H1 (cell line): ENCODE measurements at regions of chr16 and their contacts with region 1.

Region 1: DNA sequence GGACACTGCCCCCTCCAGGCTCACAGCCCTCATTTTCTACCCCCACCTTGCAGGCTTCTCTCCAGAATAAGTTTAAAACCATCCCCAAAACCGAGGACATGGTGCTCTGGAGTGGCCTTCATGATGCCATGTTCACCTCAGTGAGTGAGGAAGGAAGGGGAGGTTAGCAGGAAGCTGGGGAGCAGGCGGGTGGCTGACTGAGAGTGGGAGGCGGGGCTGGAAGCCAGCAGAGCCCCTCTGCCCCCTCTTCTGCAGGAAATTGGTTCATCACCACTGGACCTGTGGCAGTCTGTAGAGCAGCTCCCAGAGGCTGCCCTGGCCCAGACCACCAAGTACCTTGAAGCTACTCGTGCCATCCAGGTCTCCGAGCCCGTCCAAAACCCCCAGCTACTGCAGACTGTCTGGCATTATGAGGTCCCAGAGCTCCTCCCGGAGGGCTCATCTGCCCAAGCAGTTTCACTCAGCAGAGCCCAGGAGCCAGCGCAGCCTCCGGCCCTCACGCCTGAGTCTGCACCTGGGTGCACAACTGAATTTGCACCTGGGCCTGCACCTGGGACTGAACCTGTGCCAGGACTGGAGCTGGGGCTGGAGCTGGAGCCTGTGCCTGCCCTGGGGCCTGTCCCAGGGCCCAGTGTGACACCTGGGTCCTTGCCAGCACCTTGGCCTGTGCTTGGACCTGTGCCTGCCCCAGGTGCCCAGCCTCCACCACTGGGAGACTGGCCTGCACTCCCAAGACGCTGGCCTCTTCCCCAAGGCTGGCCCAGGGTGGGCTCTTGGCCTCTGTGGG is 19.0 kb downstream of the C16orf96 start:
- DNase-seq: peak; percentile 49 to 53
- H3K4me3 ChIP-seq: no peak overlapping the region
- H3K27ac ChIP-seq: no peak overlapping the region
- H3K4me1 ChIP-seq: peaks cover 7 to 11% (median 7%) of the 10 kb centered on the region in 4 experiments
- H3K27me3 ChIP-seq: no peaks in the 10 kb centered on the region
- CTCF ChIP-seq: peak; percentile 63 to 78 (median 70)
- EP300 ChIP-seq: no peak
- POLR2A ChIP-seq: no peak
- RAD21 ChIP-seq: peak; percentile 86 to 93

Region 2: DNA sequence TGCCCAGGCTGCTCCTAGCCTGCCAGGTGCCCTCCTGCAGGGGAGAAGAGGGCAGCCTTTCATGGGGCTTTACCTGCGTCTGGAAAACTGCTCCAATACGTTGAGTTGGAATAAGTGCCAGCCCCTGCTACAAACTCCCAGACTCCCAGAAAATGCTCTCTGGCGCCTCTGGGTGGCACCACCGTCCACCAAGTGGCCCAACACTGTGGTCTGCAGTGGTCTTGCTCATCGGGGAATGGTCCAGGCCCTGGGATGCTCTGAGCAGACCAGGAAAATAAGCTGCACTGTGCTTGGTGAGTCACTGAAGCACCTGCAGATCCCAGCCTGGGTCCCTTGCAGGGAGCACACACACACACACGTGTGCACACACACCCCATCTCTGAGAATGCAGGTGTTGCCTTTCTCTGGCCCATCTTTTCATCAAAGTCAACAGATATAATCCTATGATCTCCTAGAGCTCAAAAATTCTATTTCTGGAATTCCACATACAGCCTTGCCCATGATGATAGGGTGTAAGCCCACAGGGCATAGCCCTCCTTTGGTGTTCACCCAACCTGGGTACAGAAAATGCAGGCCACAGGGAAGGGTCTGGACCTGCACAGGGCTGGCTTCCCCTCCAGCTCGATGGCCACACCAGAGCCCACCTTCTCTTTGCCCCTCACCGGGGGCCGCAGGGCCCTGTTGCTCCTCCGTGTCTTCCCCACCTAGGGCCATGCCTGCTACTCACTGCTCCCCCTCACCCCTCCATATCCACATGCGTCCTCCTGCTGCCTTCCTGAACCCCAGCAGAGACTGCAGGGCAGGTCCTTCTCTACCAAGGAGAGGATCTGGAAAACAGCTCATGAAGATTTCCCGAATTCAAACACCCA is 57.1 kb before region 1 on chr16:
- CTCF ChIA-PET with region 1: interaction called, 134 read pairs
- POLR2A ChIA-PET with region 1: interaction called, 5 read pairs
- DNase-seq: peak in 1 of 2 experiments; percentile 79
- H3K4me3 ChIP-seq: no peak overlapping the region
- H3K27ac ChIP-seq: no peak overlapping the region; the same call in 1 of the 2 replicates
- H3K4me1 ChIP-seq: peaks cover 0 to 18% (median 13%) of the 10 kb centered on the region in 4 experiments; a peak in 6 of 7 replicates
- H3K27me3 ChIP-seq: no peaks in the 10 kb centered on the region
- CTCF ChIP-seq: peak; percentile 91 to 97 (median 94)
- EP300 ChIP-seq: no peak
- POLR2A ChIP-seq: 0 out of 3 replicates have a peak, but pooled peaks of 1 of the 2 experiments have one; percentile 27
- RAD21 ChIP-seq: peak; percentile 98 to 99

Region 3: DNA sequence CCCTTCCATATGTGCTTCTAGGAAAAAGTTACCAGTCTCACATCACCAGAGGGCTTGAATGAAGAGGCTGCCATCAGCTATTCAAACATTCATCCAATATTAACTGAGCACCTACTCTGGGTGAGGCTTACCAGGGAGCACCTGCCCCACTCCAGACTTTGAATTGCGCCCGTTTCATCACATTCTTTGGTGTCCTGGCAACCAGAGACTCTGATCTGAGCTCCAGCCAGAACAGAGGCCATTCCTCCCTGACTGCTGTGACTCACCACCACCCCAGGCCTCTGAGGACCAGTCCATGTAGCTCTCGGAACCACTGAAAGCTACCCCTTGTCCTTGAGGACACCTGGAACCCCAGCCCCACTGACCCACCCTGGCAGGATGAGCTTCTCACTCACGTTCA is 19.0 kb before region 1 on chr16 and contains the start of gene C16orf96:
- CTCF ChIA-PET with region 1: interaction called, 143 read pairs
- POLR2A ChIA-PET with region 1: interaction called, 9 read pairs
- DNase-seq: no peak
- H3K4me3 ChIP-seq: no peak within 1 kb of the TSS; a peak in 1 of 8 replicates
- H3K27ac ChIP-seq: no peak within 1 kb of the TSS
- H3K4me1 ChIP-seq: peaks cover 0 to 3% (median under 1%) of the 10 kb centered on the region in 4 experiments; a peak in 2 of 7 replicates
- H3K27me3 ChIP-seq: no peaks in the 10 kb centered on the region
- CTCF ChIP-seq: no peak
- EP300 ChIP-seq: no peak
- POLR2A ChIP-seq: no peak
- RAD21 ChIP-seq: no peak
- total RNA-seq, gene C16orf96: 1.3 and 1.6 TPM in 2 replicates

Region 4: GRCh38 chr16:4561596-4561995 is 13.5 kb before region 1 on chr16:
- CTCF ChIA-PET with region 1: interaction called, 143 read pairs
- POLR2A ChIA-PET with region 1: interaction called, 9 read pairs
- DNase-seq: no peak
- H3K4me3 ChIP-seq: no peak overlapping the region
- H3K27ac ChIP-seq: no peak overlapping the region
- H3K4me1 ChIP-seq: no peaks in the 10 kb centered on the region
- H3K27me3 ChIP-seq: no peaks in the 10 kb centered on the region
- CTCF ChIP-seq: no peak
- EP300 ChIP-seq: no peak
- POLR2A ChIP-seq: no peak
- RAD21 ChIP-seq: no peak

Region 5: DNA sequence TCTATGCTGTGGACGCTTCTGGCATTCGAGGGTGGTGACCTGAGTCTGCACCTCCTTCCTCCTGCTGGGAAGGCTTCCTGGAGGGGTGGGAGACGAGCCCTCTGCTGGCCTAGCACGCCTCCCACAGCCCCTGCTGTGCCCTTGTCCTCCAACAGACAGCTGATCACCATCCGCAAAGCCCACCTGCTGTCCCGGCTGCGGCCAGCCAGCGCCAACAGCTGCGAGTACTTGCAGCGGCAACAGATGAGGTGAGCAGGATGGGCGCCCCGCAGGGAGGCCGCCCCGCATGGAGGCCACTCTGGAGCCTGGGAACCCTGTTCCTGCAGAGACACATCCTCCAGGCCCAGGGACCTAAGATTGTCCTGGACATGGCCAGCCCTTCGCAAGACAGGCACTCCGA is 18.0 kb after region 1 on chr16:
- CTCF ChIA-PET with region 1: interaction called, 10 read pairs
- POLR2A ChIA-PET with region 1: interaction called, 7 read pairs
- DNase-seq: peak; percentile 49 to 71
- H3K4me3 ChIP-seq: no peak overlapping the region
- H3K27ac ChIP-seq: no peak overlapping the region
- H3K4me1 ChIP-seq: peaks cover 0 to 18% (median 10%) of the 10 kb centered on the region in 4 experiments; a peak in 6 of 7 replicates
- H3K27me3 ChIP-seq: no peaks in the 10 kb centered on the region; a peak in 1 of 7 replicates
- CTCF ChIP-seq: no peak
- EP300 ChIP-seq: no peak; a peak in 1 of 3 replicates
- POLR2A ChIP-seq: no peak
- RAD21 ChIP-seq: no peak; a peak in 1 of 4 replicates

Region 6: DNA sequence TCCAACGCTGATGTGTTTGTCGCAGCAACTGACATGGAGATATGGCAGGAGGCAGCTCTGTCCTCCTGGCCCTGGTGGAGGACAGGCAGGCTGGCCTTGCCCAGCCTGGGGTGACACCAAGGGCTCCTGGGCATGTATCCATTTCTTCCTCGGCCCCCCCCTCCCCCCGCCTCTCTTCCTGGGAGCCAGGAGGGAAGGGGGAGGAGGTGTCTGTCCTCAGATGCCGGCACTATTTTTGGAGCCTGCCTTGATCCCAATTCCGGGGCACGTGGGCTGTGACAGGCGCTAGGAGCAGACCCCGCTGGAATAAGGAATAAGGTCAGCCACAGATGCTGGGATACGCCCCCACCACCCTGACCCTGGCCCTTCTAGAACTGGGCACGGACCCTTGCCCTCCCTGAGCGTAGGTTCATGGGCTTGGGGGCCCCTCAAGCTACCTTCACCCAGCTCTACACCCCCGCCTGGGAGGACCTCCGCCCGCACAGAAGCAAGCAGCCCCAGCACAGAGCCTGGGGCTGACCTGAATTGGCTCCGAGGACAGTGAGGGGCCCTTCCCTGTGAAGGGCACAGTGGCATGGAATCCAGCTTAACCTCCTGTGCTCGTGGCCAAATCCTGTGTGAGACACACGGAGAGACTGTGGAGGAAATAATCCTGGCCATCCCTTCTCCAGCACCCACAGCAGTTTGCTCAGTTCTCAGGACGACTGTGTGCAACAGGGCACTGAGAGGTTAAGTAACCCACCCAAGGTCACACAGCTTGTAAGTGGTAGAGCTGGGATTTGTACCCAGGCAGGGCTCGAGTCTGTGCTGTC is 407.1 kb after region 1 on chr16:
- CTCF ChIA-PET with region 1: no interaction called
- POLR2A ChIA-PET with region 1: no interaction called
- DNase-seq: no peak
- H3K4me3 ChIP-seq: no peak overlapping the region
- H3K27ac ChIP-seq: no peak overlapping the region
- H3K4me1 ChIP-seq: peaks cover 0 to 5% (median 4%) of the 10 kb centered on the region in 4 experiments; a peak in 6 of 7 replicates
- H3K27me3 ChIP-seq: peaks cover 0 to 8% (median 3%) of the 10 kb centered on the region in 4 experiments; a peak in 4 of 7 replicates
- CTCF ChIP-seq: no peak
- EP300 ChIP-seq: no peak
- POLR2A ChIP-seq: no peak
- RAD21 ChIP-seq: no peak